ENCODE measurements at regions of chr6 and their contacts with region 1.

Region 1: GRCh38 chr6:124984668-124985338 is 22.6 kb downstream of the RNF217 start:
- DNase-seq: no peak
- H3K4me3 ChIP-seq: no peak overlapping the region
- H3K27ac ChIP-seq: peak overlapping the region; percentile 76
- H3K4me1 ChIP-seq: peaks cover 48% of the 10 kb centered on the region
- H3K27me3 ChIP-seq: no peaks in the 10 kb centered on the region
- CTCF ChIP-seq: no peak

Region 2: DNA sequence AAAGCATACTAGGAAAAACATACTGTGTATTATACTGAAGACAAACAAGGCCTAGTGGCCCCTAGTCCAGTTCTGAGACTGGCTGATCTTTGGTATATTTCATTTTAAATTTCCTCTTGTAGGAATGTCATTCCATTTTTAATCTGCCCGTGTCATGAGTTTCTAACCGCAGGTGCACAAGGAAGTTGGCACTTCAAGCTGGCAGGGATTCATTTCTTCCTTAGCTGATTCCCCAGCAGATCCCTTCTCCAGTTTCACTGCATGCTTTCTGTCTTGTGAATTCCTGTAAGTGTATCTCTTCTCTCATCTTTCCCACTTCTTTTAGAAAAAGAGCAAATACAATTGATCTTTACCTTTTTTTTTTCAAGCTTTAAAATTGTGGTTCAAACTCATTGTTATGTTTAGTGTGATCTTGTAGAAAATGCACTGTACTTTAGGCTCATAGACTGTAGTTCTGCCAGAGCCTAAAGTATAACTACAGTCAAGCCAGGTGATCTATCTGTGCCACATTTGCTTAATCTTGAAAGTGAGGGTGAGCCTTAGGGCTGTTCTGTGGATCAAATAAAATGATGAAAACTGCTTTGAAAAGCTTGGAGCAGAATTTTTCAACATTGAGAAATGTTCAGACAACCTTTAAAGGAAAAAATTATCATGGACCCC is 14.4 kb after region 1 on chr6:
- CTCF ChIA-PET with region 1: no interaction called
- POLR2A ChIA-PET with region 1: interaction called, 15 read pairs
- intact Hi-C with region 1: no loop called
- DNase-seq: peak; percentile 44 to 75
- H3K4me3 ChIP-seq: no peak overlapping the region
- H3K27ac ChIP-seq: peak overlapping the region; percentile 60
- H3K4me1 ChIP-seq: peaks cover 39% of the 10 kb centered on the region
- H3K27me3 ChIP-seq: no peaks in the 10 kb centered on the region
- CTCF ChIP-seq: no peak

Measured in PC-9 (cell line).